Gastrocnemius medialis (tissue), 4 donors: ENCODE measurements at regions of chr10 and their contacts with region 1.

Region 1: GRCh38 chr10:79149662-79150443 is 81.1 kb downstream of the ZMIZ1 start:
- DNase-seq: peak; percentile 76 to 94
- ATAC-seq: peak; percentile 13 to 32
- H3K4me3 ChIP-seq: no peak overlapping the region
- H3K27ac ChIP-seq: peak overlapping the region; percentile 86 to 92 (median 88)
- H3K4me1 ChIP-seq: peaks cover 85 to 99% of the 10 kb centered on the region in 2 donors
- H3K27me3 ChIP-seq: no peaks in the 10 kb centered on the region
- CTCF ChIP-seq: no peak
- POLR2A ChIP-seq: peak; percentile 34 to 51

Region 2: GRCh38 chr10:79007421-79008319 is 142.2 kb before region 1 on chr10:
- in situ Hi-C with region 1: no loop called
- intact Hi-C with region 1: loop called (anchors 5 kb)
- DNase-seq: peak; percentile 81 to 85
- ATAC-seq: peak; percentile 94 to 96
- H3K4me3 ChIP-seq: no peak overlapping the region
- H3K27ac ChIP-seq: peak overlapping the region; percentile 62 to 86 (median 82)
- H3K4me1 ChIP-seq: peaks cover 33 to 37% of the 10 kb centered on the region in 2 donors
- H3K27me3 ChIP-seq: no peaks in the 10 kb centered on the region
- CTCF ChIP-seq: no peak
- POLR2A ChIP-seq: peak in 1 of 2 donors; percentile 31

Region 3: GRCh38 chr10:79068562-79069324 is 81.1 kb before region 1 on chr10 and contains the start of gene ZMIZ1:
- in situ Hi-C with region 1: no loop called
- intact Hi-C with region 1: loop called (anchors 2 kb)
- DNase-seq: peak; percentile 89 to 91
- ATAC-seq: peak; percentile 62 to 67
- H3K4me3 ChIP-seq: peak within 1 kb of the TSS; percentile 71 to 98 (median 84)
- H3K27ac ChIP-seq: peak within 1 kb of the TSS; percentile 93 to 100 (median 98)
- H3K4me1 ChIP-seq: peaks cover 25 to 29% of the 10 kb centered on the region in 2 donors
- H3K27me3 ChIP-seq: no peaks in the 10 kb centered on the region
- CTCF ChIP-seq: peak in 3 of 5 experiments; percentile 20 to 49 (median 38)
- POLR2A ChIP-seq: peak; percentile 97
- total RNA-seq, gene ZMIZ1: 22.7 to 37.5 (median 31.7) TPM

Region 4: GRCh38 chr10:79093658-79094411 is 56.0 kb before region 1 on chr10:
- in situ Hi-C with region 1: loop called in 1 of 4 experiments (anchors 10 kb)
- intact Hi-C with region 1: loop called (anchors 2 kb)
- DNase-seq: peak; percentile 75 to 92
- ATAC-seq: peak; percentile 86 to 92
- H3K4me3 ChIP-seq: peak overlapping the region; percentile 5 to 36 (median 17)
- H3K27ac ChIP-seq: peak overlapping the region; percentile 84 to 97 (median 90)
- H3K4me1 ChIP-seq: peaks cover 68 to 97% of the 10 kb centered on the region in 2 donors
- H3K27me3 ChIP-seq: no peaks in the 10 kb centered on the region
- CTCF ChIP-seq: no peak
- POLR2A ChIP-seq: peak; percentile 39 to 41

Region 5: DNA sequence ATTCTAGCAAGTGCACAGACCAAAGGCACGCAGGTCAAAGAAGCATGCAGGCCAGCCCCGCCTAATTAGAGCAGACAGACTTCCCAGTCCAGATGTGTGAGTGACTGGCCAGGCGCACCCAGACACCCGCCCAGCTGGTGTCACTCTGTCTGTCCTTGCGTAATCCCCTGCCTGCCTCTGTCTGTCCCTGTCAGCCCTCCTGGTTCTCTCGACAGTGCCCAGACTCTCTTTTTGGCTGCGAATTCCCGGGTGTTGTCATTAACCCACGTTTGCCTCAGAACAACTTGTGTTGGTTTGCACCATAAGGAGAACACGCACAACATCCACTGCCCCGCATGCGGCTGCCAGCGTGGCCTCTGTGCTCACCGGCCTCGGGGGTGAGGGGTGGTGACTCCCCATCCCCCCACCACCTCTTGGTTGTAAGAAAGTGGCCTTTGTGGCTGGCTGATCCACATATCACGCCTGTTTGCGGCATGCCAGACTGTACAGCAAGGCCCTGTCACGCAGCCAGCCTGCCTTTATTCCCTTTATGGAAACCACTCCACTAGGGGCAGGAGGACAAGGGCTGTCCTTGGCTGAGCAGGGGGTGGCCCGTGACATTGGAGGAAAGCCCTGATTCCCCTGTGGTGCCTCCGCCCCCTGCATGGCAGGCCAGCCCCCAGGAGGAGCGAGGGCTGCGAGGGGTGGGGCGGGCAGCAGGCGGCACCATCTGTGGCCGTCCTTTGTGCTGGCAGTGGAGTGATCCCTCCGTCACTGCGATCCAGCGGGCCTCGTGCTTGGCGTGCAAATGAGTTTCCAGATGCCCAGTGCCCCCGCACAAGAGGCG is 124.6 kb after region 1 on chr10:
- in situ Hi-C with region 1: no loop called
- intact Hi-C with region 1: loop called (anchors 10 kb)
- DNase-seq: peak; percentile 90 to 97
- ATAC-seq: peak; percentile 88
- H3K4me3 ChIP-seq: peak overlapping the region in 2 of 4 donors; percentile 13 to 20
- H3K27ac ChIP-seq: peak overlapping the region; percentile 82 to 89 (median 88)
- H3K4me1 ChIP-seq: peaks cover 23 to 42% of the 10 kb centered on the region in 2 donors
- H3K27me3 ChIP-seq: no peaks in the 10 kb centered on the region
- CTCF ChIP-seq: peak in 4 of 5 experiments; percentile 13 to 35 (median 24)
- POLR2A ChIP-seq: no peak